ENCODE measurements at regions of chr14 and their contacts with region 1.

Region 1: GRCh38 chr14:97978341-97978740 is 1181.2 kb downstream of the VRK1 start:
- DNase-seq: peak; percentile 59 to 89 (median 76)
- ATAC-seq: peak; percentile 72
- H3K4me3 ChIP-seq: peak overlapping the region; percentile 76
- H3K4me3 Mint-ChIP-seq: peak overlapping the region; percentile 89
- H3K27ac ChIP-seq: peak overlapping the region; percentile 74 to 82
- H3K27ac Mint-ChIP-seq: peak overlapping the region; percentile 94
- H3K4me1 ChIP-seq: peaks cover 48% of the 10 kb centered on the region
- H3K4me1 Mint-ChIP-seq: peaks cover 84% of the 10 kb centered on the region
- H3K27me3 ChIP-seq: no peaks in the 10 kb centered on the region
- H3K27me3 Mint-ChIP-seq: no peaks in the 10 kb centered on the region
- CTCF ChIP-seq: peak; percentile 69

Region 2: DNA sequence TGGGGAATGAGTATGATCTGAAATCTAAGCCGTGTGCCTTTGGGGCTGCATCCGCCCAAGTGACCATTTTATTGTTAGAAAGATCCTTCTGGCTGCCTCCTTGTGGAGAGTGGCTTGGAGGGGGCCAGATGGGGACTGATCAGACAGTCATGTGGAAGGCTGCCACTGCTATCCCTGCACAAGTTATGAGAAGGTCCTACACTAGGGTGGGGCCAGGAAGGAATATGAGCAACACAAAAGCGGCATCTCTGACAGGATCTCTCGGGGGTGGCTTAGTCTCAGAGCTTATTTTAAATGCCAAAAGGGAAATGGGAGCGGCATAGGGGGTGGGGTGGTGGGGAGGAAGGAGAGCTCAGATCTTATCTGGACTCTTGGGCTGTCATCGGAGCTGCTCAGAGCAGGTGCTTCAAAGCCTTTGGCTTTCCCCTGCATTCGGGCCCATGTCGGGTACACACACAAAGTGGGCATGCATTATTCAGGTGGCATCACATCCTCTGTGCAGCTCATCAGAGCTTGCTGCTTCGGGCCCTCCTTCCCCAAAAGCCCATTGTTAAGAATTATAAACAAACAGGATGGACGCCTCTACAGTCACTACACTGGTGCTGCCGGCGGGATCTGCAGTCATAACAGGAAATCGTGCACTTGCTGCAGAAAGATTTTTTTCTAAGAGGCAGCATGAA is 375.8 kb before region 1 on chr14:
- CTCF ChIA-PET with region 1: interaction called, 8 read pairs
- POLR2A ChIA-PET with region 1: interaction called, 34 read pairs
- intact Hi-C with region 1: loop called (anchors 1 to 10 kb)
- DNase-seq: peak; percentile 66 to 93 (median 78)
- ATAC-seq: peak; percentile 88
- H3K4me3 ChIP-seq: peak overlapping the region; percentile 32
- H3K4me3 Mint-ChIP-seq: no peak overlapping the region
- H3K27ac ChIP-seq: peak overlapping the region; percentile 77 to 86
- H3K27ac Mint-ChIP-seq: no peak overlapping the region
- H3K4me1 ChIP-seq: peaks cover 52% of the 10 kb centered on the region
- H3K4me1 Mint-ChIP-seq: no peaks in the 10 kb centered on the region
- H3K27me3 ChIP-seq: no peaks in the 10 kb centered on the region
- H3K27me3 Mint-ChIP-seq: no peaks in the 10 kb centered on the region
- CTCF ChIP-seq: no peak

Region 3: GRCh38 chr14:97878727-97879126 is 99.6 kb before region 1 on chr14:
- CTCF ChIA-PET with region 1: no interaction called
- POLR2A ChIA-PET with region 1: interaction called, 11 read pairs
- intact Hi-C with region 1: no loop called
- DNase-seq: peak in 11 of 14 experiments; percentile 2 to 55 (median 31)
- ATAC-seq: peak; percentile 89
- H3K4me3 ChIP-seq: no peak overlapping the region
- H3K4me3 Mint-ChIP-seq: peak overlapping the region; percentile 8
- H3K27ac ChIP-seq: peak overlapping the region; percentile 16 to 30
- H3K27ac Mint-ChIP-seq: peak overlapping the region; percentile 87
- H3K4me1 ChIP-seq: peaks cover 20% of the 10 kb centered on the region
- H3K4me1 Mint-ChIP-seq: peaks cover 65% of the 10 kb centered on the region
- H3K27me3 ChIP-seq: no peaks in the 10 kb centered on the region
- H3K27me3 Mint-ChIP-seq: no peaks in the 10 kb centered on the region
- CTCF ChIP-seq: no peak

Region 4: DNA sequence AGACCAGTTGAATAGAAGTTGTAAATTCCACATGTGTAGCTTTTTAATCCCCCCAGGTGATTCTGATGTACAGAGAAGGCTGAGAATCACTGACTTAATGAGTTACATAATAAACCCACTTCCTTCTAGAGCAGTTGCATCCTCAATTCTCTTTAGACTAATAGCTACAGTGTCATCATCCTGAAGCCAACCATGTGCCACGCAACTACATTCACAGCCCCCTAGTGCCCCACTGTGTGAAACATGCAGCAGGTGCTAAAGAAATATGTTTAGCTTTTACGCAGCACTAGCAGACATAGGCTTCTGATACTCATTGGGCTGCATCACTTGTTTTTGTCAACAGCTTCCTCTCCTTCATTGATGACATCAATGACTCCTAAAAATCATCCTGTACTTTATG is 125.4 kb after region 1 on chr14:
- CTCF ChIA-PET with region 1: interaction called, 6 read pairs
- POLR2A ChIA-PET with region 1: interaction called, 4 read pairs
- intact Hi-C with region 1: loop called in 1 of 2 experiments (anchors 10 kb)
- DNase-seq: peak in 9 of 14 experiments; percentile 7 to 48 (median 37)
- ATAC-seq: peak; percentile 96
- H3K4me3 ChIP-seq: no peak overlapping the region
- H3K4me3 Mint-ChIP-seq: no peak overlapping the region
- H3K27ac ChIP-seq: no peak overlapping the region
- H3K27ac Mint-ChIP-seq: peak overlapping the region; percentile 41
- H3K4me1 ChIP-seq: peaks cover 2% of the 10 kb centered on the region
- H3K4me1 Mint-ChIP-seq: peaks cover 30% of the 10 kb centered on the region
- H3K27me3 ChIP-seq: no peaks in the 10 kb centered on the region
- H3K27me3 Mint-ChIP-seq: no peaks in the 10 kb centered on the region
- CTCF ChIP-seq: no peak

Region 5: DNA sequence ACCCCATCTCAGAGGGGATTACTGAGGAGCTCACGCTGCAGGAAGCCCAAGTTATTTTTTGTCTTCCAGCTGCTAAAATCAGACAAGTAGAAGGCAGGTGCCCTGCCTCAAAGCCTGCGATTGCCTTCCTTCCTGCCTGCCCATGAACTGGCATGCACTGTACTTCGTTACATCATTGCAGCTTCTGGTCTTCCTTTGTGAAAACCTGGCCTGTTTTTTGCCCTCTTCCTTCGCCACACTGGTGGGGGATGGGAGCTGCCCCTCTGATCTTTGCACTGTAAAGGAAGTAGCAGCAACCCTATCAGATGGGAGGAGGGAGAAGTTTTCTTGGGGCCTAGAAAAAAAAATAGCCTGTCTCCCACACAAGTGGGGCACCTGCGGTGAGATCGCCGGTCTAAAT is 195.0 kb after region 1 on chr14:
- CTCF ChIA-PET with region 1: no interaction called
- POLR2A ChIA-PET with region 1: interaction called, 22 read pairs
- intact Hi-C with region 1: no loop called
- DNase-seq: peak; percentile 34 to 94 (median 74)
- ATAC-seq: peak; percentile 70
- H3K4me3 ChIP-seq: peak overlapping the region; percentile 33
- H3K4me3 Mint-ChIP-seq: peak overlapping the region; percentile 83
- H3K27ac ChIP-seq: peak overlapping the region; percentile 78 to 80
- H3K27ac Mint-ChIP-seq: peak overlapping the region; percentile 93
- H3K4me1 ChIP-seq: peaks cover 92% of the 10 kb centered on the region
- H3K4me1 Mint-ChIP-seq: peaks cover 100% of the 10 kb centered on the region
- H3K27me3 ChIP-seq: no peaks in the 10 kb centered on the region
- H3K27me3 Mint-ChIP-seq: no peaks in the 10 kb centered on the region
- CTCF ChIP-seq: no peak

Region 6: DNA sequence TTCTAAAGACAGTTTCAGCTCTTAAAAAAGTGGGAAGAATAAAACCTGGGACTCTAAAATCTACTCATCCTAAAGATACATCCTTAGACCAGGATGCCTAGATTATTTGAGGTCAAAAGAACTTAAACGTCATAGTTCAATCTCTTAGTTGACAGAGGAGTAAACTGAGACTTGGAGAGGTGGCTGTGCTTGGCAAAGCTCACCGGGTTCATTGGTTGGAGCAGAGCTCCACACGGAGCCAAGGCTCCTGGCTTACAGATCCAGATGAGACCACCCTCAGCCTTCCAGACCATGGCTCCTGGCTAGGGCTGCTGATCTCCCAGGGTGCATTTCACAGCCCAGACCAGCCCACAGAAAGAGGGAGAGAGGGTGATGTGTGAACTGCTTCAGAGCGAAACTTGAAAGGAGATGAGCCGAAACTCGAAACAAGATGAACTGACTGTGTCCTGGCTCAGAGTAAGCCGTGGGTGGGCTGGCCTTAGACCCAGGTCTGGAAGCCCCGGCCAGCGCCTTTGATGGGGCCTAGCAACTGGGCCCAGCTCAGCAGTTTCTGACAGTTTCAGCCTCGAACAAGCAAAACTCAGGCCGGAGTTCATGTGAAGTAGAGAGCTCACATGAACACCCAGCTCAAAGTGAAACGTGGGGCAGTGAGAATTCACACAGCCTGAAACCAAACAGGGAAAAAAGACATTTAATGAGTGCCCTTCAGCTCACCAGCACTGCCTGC is 248.8 kb after region 1 on chr14:
- CTCF ChIA-PET with region 1: interaction called, 3 read pairs
- POLR2A ChIA-PET with region 1: interaction called, 11 read pairs
- intact Hi-C with region 1: loop called in 1 of 2 experiments (anchors 10 kb)
- DNase-seq: peak in 5 of 14 experiments; percentile 13 to 56 (median 48)
- ATAC-seq: no peak
- H3K4me3 ChIP-seq: no peak overlapping the region
- H3K4me3 Mint-ChIP-seq: peak overlapping the region; percentile 61
- H3K27ac ChIP-seq: peak overlapping the region; percentile 65
- H3K27ac Mint-ChIP-seq: peak overlapping the region; percentile 96
- H3K4me1 ChIP-seq: peaks cover 84% of the 10 kb centered on the region
- H3K4me1 Mint-ChIP-seq: peaks cover 94% of the 10 kb centered on the region
- H3K27me3 ChIP-seq: no peaks in the 10 kb centered on the region
- H3K27me3 Mint-ChIP-seq: no peaks in the 10 kb centered on the region
- CTCF ChIP-seq: no peak

Region 7: GRCh38 chr14:98974082-98974481 is 995.7 kb after region 1 on chr14:
- CTCF ChIA-PET with region 1: no interaction called
- POLR2A ChIA-PET with region 1: no interaction called
- intact Hi-C with region 1: no loop called
- DNase-seq: no peak
- ATAC-seq: no peak
- H3K4me3 ChIP-seq: no peak overlapping the region
- H3K4me3 Mint-ChIP-seq: no peak overlapping the region
- H3K27ac ChIP-seq: no peak overlapping the region
- H3K27ac Mint-ChIP-seq: no peak overlapping the region
- H3K4me1 ChIP-seq: no peaks in the 10 kb centered on the region
- H3K4me1 Mint-ChIP-seq: peaks cover 4% of the 10 kb centered on the region
- H3K27me3 ChIP-seq: no peaks in the 10 kb centered on the region
- H3K27me3 Mint-ChIP-seq: no peaks in the 10 kb centered on the region
- CTCF ChIP-seq: no peak